Activated CD4-positive, alpha-beta T cell treated with anti-CD3 and anti-CD28 coated beads for 36 hours (primary cell): ENCODE measurements at regions of chr1 and their contacts with region 1.

Region 1: DNA sequence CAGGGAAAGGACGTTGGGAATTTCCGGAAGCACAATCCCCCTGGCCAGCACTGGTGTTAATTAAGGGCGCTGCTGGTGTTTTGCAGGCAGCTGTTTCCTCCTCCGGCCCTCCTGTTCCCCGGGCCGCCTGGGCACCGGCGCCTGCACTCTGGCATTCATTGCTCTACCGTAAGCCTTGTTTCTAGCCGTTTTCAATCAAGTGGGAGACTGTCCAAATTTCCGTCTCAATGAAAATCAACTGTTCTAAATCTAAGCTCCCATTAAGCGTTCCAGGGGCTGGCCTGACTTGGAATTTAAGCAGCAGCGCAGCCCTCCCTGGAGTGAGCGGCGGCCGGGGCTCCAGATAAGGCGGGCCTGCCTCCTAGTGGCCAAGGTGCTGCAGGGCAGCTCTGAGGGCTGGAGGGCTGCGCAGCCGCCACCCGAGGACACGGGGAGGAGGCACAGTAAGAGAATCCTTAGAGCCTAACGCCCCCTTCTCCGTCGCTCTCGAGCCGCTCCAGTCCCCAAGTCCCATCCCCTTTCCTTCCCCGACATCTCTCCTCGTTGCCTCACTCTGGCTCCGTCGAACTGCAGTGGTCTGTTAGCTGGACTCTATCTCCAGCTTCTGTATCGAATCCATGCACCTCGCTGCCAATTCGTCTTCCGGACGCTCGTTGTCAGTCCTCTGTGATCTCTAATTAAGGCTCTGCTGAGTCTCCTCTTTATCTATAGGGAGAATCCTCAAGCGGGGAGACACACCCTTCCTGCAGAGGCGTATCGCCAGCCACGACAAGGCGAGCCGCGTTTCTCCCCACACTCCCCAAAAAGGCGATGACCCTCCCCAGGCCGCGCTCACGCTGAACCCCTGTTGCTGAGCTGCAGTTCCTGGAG is 57.8 kb upstream of the LRRC8D start:
- DNase-seq: peak; percentile 94
- ATAC-seq: peak; percentile 99
- H3K4me3 Mint-ChIP-seq: peak overlapping the region; percentile 68
- H3K27ac Mint-ChIP-seq: peak overlapping the region; percentile 89
- H3K4me1 Mint-ChIP-seq: peaks cover 54% of the 10 kb centered on the region
- H3K27me3 Mint-ChIP-seq: no peaks in the 10 kb centered on the region

Region 2: GRCh38 chr1:89524369-89525168 is 238.4 kb before region 1 on chr1 and contains the start of gene LRRC8B:
- CTCF ChIA-PET with region 1: interaction called, 9 read pairs
- POLR2A ChIA-PET with region 1: no interaction called
- intact Hi-C with region 1: loop called (anchors 1 to 2 kb)
- DNase-seq: peak; percentile 94
- ATAC-seq: peak; percentile 71
- H3K4me3 Mint-ChIP-seq: no peak within 1 kb of the TSS
- H3K27ac Mint-ChIP-seq: no peak within 1 kb of the TSS
- H3K4me1 Mint-ChIP-seq: peaks cover 24% of the 10 kb centered on the region
- H3K27me3 Mint-ChIP-seq: no peaks in the 10 kb centered on the region
- total RNA-seq, gene LRRC8B: 38.9 to 41.5 TPM

Region 3: GRCh38 chr1:89615676-89616598 is 147.1 kb before region 1 on chr1:
- CTCF ChIA-PET with region 1: interaction called, 21 read pairs
- POLR2A ChIA-PET with region 1: interaction called, 7 read pairs
- intact Hi-C with region 1: no loop called
- DNase-seq: peak; percentile 46
- ATAC-seq: no peak
- H3K4me3 Mint-ChIP-seq: no peak overlapping the region
- H3K27ac Mint-ChIP-seq: no peak overlapping the region
- H3K4me1 Mint-ChIP-seq: peaks cover 86% of the 10 kb centered on the region
- H3K27me3 Mint-ChIP-seq: no peaks in the 10 kb centered on the region

Region 4: DNA sequence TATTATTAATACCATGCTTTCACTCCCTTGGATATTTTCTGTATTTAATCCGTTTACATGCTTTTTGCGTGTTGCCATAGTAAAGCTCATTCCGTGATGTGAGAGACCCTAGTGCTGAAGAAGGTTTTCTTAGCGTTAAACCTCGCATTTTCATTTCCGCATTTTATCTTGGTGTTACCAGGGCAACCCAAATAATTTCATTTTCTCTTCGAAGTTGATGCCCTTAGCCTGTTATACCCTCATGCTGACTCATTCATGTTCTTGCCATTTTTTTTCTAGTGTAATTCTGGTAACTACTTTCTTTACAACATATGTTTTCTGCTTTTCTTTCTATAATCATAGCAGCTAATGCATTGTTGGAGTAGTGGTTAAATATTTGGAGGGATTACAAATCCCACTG is 92.9 kb before region 1 on chr1:
- CTCF ChIA-PET with region 1: interaction called, 18 read pairs
- POLR2A ChIA-PET with region 1: interaction called, 3 read pairs
- intact Hi-C with region 1: no loop called
- DNase-seq: no peak
- ATAC-seq: peak; percentile 65
- H3K4me3 Mint-ChIP-seq: peak overlapping the region; percentile 36
- H3K27ac Mint-ChIP-seq: peak overlapping the region; percentile 88
- H3K4me1 Mint-ChIP-seq: peaks cover 93% of the 10 kb centered on the region
- H3K27me3 Mint-ChIP-seq: no peaks in the 10 kb centered on the region

Region 5: DNA sequence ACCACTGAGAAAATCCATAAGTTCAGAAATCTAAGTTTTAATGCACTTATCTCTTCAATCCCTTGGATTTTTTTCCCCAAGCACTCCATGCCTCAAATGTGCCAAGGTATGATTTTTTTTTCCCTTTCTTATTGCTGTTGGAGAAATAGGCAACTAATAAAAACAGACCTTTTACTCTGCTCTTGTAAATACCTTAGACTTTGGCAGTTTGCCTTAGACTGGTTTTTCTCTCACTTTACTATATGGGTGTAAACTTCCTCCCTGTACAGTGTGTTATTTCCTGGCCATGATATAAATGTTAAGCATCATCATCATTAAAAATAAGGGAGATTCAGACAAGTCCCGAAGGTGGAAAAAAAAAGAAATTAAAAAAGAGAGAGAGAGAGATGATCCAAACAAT is 64.4 kb before region 1 on chr1:
- CTCF ChIA-PET with region 1: interaction called, 13 read pairs
- POLR2A ChIA-PET with region 1: no interaction called
- intact Hi-C with region 1: loop called in 1 of 2 experiments (anchors 2 kb)
- DNase-seq: no peak
- ATAC-seq: no peak
- H3K4me3 Mint-ChIP-seq: peak overlapping the region; percentile 17
- H3K27ac Mint-ChIP-seq: peak overlapping the region; percentile 94
- H3K4me1 Mint-ChIP-seq: peaks cover 89% of the 10 kb centered on the region
- H3K27me3 Mint-ChIP-seq: no peaks in the 10 kb centered on the region